ENCODE measurements at regions of chr1 and their contacts with region 1.

Region 1: DNA sequence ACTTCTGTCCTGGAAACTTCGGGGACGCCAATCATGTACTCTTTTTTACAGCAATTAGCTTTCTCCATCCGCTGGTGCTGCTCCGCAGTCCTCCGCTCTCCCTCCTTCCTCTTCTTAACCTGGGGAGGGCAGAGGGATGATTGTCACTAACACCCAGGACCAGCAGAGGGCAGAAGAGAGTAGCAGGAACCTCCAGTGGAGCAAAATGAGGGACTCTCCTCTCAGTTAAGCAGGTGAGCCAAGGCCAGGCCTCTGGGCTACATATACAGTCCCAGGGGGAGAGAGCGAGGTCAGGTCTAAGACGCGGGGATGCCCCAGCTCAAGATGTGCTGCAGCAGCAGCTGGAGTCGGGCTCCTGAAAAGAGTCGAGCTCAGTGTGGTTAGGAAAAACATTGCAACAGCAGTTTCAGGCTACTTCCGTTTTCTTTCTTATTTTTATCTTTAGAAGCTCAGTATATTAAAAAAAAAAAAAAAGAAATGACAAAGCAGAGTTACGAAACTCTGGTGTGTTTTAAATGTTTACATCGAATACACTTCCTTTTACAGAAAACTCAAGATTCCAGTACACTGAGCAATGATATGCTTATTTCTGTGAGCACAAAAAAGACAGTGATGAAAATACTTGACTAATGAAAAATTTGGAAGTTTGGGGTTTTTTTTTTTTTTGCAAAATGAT is 25.7 kb upstream of the NLRP3 start:
- DNase-seq: peak; percentile 90
- ATAC-seq: peak; percentile 99
- H3K4me3 Mint-ChIP-seq: peak overlapping the region; percentile 50
- H3K27ac Mint-ChIP-seq: peak overlapping the region; percentile 64
- H3K4me1 Mint-ChIP-seq: peaks cover 24% of the 10 kb centered on the region
- H3K27me3 Mint-ChIP-seq: peaks cover 14% of the 10 kb centered on the region

Region 2: GRCh38 chr1:247401310-247402119 is 11.3 kb after region 1 on chr1:
- CTCF ChIA-PET with region 1: interaction called, 17 read pairs
- POLR2A ChIA-PET with region 1: no interaction called
- intact Hi-C with region 1: no loop called
- DNase-seq: no peak
- ATAC-seq: no peak
- H3K4me3 Mint-ChIP-seq: no peak overlapping the region
- H3K27ac Mint-ChIP-seq: no peak overlapping the region
- H3K4me1 Mint-ChIP-seq: peaks cover 4% of the 10 kb centered on the region
- H3K27me3 Mint-ChIP-seq: peaks cover 9% of the 10 kb centered on the region

Region 3: GRCh38 chr1:247415423-247416361 is 25.4 kb after region 1 on chr1 and contains the start of gene NLRP3:
- CTCF ChIA-PET with region 1: interaction called, 12 read pairs
- POLR2A ChIA-PET with region 1: no interaction called
- intact Hi-C with region 1: loop called (anchors 1 kb)
- DNase-seq: peak; percentile 58
- ATAC-seq: peak; percentile 75
- H3K4me3 Mint-ChIP-seq: peak within 1 kb of the TSS; percentile 73
- H3K27ac Mint-ChIP-seq: peak within 1 kb of the TSS; percentile 77
- H3K4me1 Mint-ChIP-seq: peaks cover 40% of the 10 kb centered on the region
- H3K27me3 Mint-ChIP-seq: peaks cover 2% of the 10 kb centered on the region
- total RNA-seq, gene NLRP3: 1.0 to 1.5 TPM

Region 4: GRCh38 chr1:247487057-247487456 is 96.8 kb after region 1 on chr1:
- CTCF ChIA-PET with region 1: interaction called, 32 read pairs
- POLR2A ChIA-PET with region 1: no interaction called
- intact Hi-C with region 1: loop called (anchors 1 kb)
- DNase-seq: peak; percentile 38
- ATAC-seq: peak; percentile 80
- H3K4me3 Mint-ChIP-seq: no peak overlapping the region
- H3K27ac Mint-ChIP-seq: no peak overlapping the region
- H3K4me1 Mint-ChIP-seq: no peaks in the 10 kb centered on the region
- H3K27me3 Mint-ChIP-seq: peaks cover 8% of the 10 kb centered on the region

Region 5: DNA sequence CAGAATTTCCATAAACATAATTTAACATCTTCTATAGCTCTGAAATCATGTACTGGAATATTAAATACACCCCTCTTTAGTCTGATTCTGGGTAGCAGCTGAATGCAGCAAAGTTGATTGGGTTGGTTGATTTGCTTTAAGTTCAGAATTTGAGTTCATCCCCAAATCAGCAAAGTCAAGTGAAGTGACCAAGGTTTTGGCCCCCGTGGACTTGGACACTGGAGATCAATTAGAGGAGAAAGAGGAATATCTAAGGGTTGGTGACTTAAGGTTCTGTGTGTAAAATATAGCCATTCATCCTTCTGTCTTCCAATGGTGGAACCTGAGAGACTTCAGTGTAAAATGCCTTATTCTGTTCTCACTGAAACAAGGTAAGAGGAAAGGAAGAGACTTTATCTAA is 704.6 kb after region 1 on chr1 and contains the start of gene OR2L13:
- CTCF ChIA-PET with region 1: no interaction called
- POLR2A ChIA-PET with region 1: no interaction called
- intact Hi-C with region 1: no loop called
- DNase-seq: no peak
- ATAC-seq: no peak
- H3K4me3 Mint-ChIP-seq: no peak within 1 kb of the TSS
- H3K27ac Mint-ChIP-seq: no peak within 1 kb of the TSS
- H3K4me1 Mint-ChIP-seq: no peaks in the 10 kb centered on the region
- H3K27me3 Mint-ChIP-seq: no peaks in the 10 kb centered on the region
- total RNA-seq, gene OR2L13: not detected